K562 (cell line): ENCODE measurements at regions of chr1 and their contacts with region 1.

Region 1: GRCh38 chr1:207828485-207829158 is 76.8 kb downstream of the CD46 start:
- DNase-seq: peak; percentile 73 to 91 (median 80)
- ATAC-seq: peak; percentile 83
- H3K4me3 ChIP-seq: no peak overlapping the region
- H3K27ac ChIP-seq: peak overlapping the region; percentile 36; the same call in 1 of the 3 replicates
- H3K4me1 ChIP-seq: peaks cover 53 to 80% of the 10 kb centered on the region in 2 experiments
- H3K27me3 ChIP-seq: no peaks in the 10 kb centered on the region
- CTCF ChIP-seq: peak; percentile 94 to 99 (median 96)
- EP300 ChIP-seq: no peak
- POLR2A ChIP-seq: no peak
- RAD21 ChIP-seq: peak; percentile 92 to 97

Region 2: GRCh38 chr1:207868774-207869721 is 40.4 kb after region 1 on chr1:
- CTCF ChIA-PET with region 1: interaction called, 5 read pairs
- POLR2A ChIA-PET with region 1: interaction called, 7 read pairs
- in situ Hi-C with region 1: loop called (anchors 5 kb)
- intact Hi-C with region 1: loop called (anchors 1 kb)
- DNase-seq: peak; percentile 84 to 92 (median 90)
- ATAC-seq: peak; percentile 88
- H3K4me3 ChIP-seq: peak overlapping the region; percentile 59
- H3K27ac ChIP-seq: peak overlapping the region; percentile 46
- H3K4me1 ChIP-seq: peaks cover 45 to 54% of the 10 kb centered on the region in 2 experiments
- H3K27me3 ChIP-seq: no peaks in the 10 kb centered on the region
- CTCF ChIP-seq: peak; percentile 83 to 92 (median 87)
- EP300 ChIP-seq: peak; percentile 29; the same call in 1 of the 2 replicates
- POLR2A ChIP-seq: no peak
- RAD21 ChIP-seq: peak; percentile 67 to 84; a peak in 3 of 4 replicates

Region 3: GRCh38 chr1:207876131-207876530 is 47.5 kb after region 1 on chr1:
- CTCF ChIA-PET with region 1: interaction called, 3 read pairs
- POLR2A ChIA-PET with region 1: interaction called, 5 read pairs
- in situ Hi-C with region 1: loop called (anchors 5 kb)
- intact Hi-C with region 1: loop called (anchors 1 kb)
- DNase-seq: peak; percentile 52 to 69 (median 60)
- ATAC-seq: peak; percentile 86
- H3K4me3 ChIP-seq: no peak overlapping the region
- H3K27ac ChIP-seq: no peak overlapping the region
- H3K4me1 ChIP-seq: peaks cover 17 to 24% of the 10 kb centered on the region in 2 experiments
- H3K27me3 ChIP-seq: no peaks in the 10 kb centered on the region
- CTCF ChIP-seq: peak; percentile 76 to 83 (median 78)
- EP300 ChIP-seq: no peak
- POLR2A ChIP-seq: no peak
- RAD21 ChIP-seq: peak; percentile 70 to 83

Region 4: DNA sequence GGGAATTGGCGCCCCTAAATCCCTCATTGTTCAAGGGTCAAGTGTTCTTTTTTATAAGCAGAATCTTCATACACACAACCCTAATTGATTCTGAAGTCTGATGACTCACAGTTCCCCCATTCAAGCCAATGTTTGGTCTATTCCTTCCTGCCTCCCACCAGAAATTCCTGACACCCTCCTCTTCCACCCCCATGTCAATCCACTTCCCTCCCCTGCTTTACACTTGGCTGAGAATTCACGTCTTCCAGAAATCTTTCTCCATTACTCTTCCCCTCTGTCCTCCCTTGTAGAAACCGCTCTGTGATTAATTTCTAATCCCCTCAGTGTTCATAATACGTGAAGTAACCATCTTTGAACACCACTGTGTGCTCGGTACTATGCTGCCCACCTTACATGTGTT is 158.5 kb after region 1 on chr1:
- CTCF ChIA-PET with region 1: no interaction called
- POLR2A ChIA-PET with region 1: no interaction called
- in situ Hi-C with region 1: no loop called
- intact Hi-C with region 1: no loop called
- DNase-seq: no peak
- ATAC-seq: no peak
- H3K4me3 ChIP-seq: no peak overlapping the region
- H3K27ac ChIP-seq: no peak overlapping the region
- H3K4me1 ChIP-seq: peaks cover 0 to 6% of the 10 kb centered on the region in 2 experiments; a peak in 1 of 5 replicates
- H3K27me3 ChIP-seq: peaks cover 42 to 47% of the 10 kb centered on the region in 2 experiments
- CTCF ChIP-seq: no peak
- EP300 ChIP-seq: no peak
- POLR2A ChIP-seq: no peak
- RAD21 ChIP-seq: no peak

Region 5: DNA sequence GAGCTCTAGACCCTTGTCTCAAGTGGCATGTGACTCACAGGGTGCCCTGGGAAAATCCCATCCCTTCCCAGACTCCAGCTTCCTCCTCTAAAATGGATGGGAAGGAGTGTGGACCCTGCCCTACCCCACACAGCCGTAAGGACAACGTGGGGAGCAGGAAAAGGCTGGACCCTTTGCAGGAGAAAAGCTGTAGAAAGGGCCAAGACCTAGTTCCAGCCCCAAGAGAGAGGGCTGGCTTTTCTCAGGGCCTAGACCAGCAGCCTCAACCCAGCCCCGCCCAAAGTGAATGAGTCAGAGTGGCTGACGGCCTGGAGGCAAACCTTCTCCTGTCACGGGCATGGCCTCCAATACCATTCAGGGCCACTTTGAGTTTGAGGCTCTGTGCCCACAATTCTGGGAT is 1822.5 kb after region 1 on chr1:
- CTCF ChIA-PET with region 1: no interaction called
- POLR2A ChIA-PET with region 1: no interaction called
- in situ Hi-C with region 1: loop called (anchors 10 kb)
- intact Hi-C with region 1: no loop called
- DNase-seq: peak; percentile 69 to 83 (median 75)
- ATAC-seq: peak; percentile 83
- H3K4me3 ChIP-seq: no peak overlapping the region
- H3K27ac ChIP-seq: peak overlapping the region; percentile 36; the same call in 1 of the 3 replicates
- H3K4me1 ChIP-seq: peaks cover 47 to 69% of the 10 kb centered on the region in 2 experiments
- H3K27me3 ChIP-seq: peaks cover 0 to 4% of the 10 kb centered on the region in 2 experiments; a peak in 1 of 5 replicates
- CTCF ChIP-seq: no peak
- EP300 ChIP-seq: no peak
- POLR2A ChIP-seq: no peak
- RAD21 ChIP-seq: no peak